Common myeloid progenitor, CD34-positive (primary cell): ENCODE measurements at regions of chr18 and their contacts with region 1.

Region 1: GRCh38 chr18:2917259-2918047 is 70.6 kb downstream of the EMILIN2 start:
- DNase-seq: peak in 2 of 3 donors; percentile 35
- H3K4me3 ChIP-seq: peak overlapping the region in 1 of 7 experiments; percentile 45
- H3K27ac ChIP-seq: peak overlapping the region; percentile 17 to 53
- H3K4me1 ChIP-seq: peaks cover 2 to 21% (median 9%) of the 10 kb centered on the region in 4 experiments
- H3K27me3 ChIP-seq: no peaks in the 10 kb centered on the region

Region 2: DNA sequence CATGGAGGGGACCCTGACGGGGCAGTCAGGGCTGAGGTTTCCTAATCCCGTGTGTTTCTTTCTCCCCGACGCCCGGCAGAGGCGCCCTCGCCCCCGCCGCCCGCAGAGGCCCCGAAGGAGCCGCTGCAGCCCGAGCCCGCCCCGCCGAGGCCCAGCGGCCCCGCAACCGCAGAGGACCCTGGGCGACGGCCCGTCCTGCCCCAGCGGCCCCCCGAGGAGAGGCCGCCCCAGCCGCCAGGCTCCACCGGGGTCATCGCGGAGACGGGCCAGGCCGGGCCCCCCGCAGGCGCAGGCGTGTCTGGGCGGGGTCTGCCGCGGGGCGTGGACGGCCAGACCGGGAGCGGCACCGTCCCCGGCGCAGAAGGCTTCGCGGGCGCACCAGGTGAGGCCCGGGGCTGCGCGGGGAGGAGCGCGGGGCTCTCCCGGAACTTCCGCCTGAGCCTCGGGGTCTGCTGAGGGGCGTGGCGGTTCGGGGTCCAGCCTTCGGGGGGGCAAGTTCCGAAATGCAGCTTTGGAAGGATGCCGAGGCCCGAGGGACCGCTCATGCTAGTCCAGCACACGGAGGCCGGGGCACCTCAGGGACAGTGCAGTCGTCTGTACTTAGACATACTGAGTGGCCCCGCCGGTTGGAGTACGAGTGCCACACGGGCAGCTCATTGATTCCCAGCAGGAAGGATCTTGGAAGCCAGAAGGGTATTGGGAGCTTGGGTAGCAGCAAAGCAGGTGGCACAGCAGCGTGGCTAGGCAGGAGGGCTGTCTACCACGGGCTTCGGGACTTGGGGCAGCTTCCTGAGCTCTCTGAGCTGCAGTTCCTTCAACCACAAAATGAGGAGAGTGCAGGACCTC is 10.5 kb before region 1 on chr18:
- CTCF ChIA-PET with region 1: interaction called, 14 read pairs
- POLR2A ChIA-PET with region 1: no interaction called
- DNase-seq: peak in 2 of 3 donors; percentile 52 to 69
- H3K4me3 ChIP-seq: peak overlapping the region; percentile 67 to 92 (median 85)
- H3K27ac ChIP-seq: no peak overlapping the region
- H3K4me1 ChIP-seq: peaks cover 0 to 30% (median 18%) of the 10 kb centered on the region in 4 experiments
- H3K27me3 ChIP-seq: no peaks in the 10 kb centered on the region

Region 3: GRCh38 chr18:2932247-2933181 is 15.1 kb after region 1 on chr18:
- CTCF ChIA-PET with region 1: interaction called, 10 read pairs
- POLR2A ChIA-PET with region 1: no interaction called
- DNase-seq: peak; percentile 68 to 88 (median 79)
- H3K4me3 ChIP-seq: no peak overlapping the region
- H3K27ac ChIP-seq: no peak overlapping the region
- H3K4me1 ChIP-seq: peaks cover 0 to 7% (median 0%) of the 10 kb centered on the region in 4 experiments
- H3K27me3 ChIP-seq: no peaks in the 10 kb centered on the region

Region 4: DNA sequence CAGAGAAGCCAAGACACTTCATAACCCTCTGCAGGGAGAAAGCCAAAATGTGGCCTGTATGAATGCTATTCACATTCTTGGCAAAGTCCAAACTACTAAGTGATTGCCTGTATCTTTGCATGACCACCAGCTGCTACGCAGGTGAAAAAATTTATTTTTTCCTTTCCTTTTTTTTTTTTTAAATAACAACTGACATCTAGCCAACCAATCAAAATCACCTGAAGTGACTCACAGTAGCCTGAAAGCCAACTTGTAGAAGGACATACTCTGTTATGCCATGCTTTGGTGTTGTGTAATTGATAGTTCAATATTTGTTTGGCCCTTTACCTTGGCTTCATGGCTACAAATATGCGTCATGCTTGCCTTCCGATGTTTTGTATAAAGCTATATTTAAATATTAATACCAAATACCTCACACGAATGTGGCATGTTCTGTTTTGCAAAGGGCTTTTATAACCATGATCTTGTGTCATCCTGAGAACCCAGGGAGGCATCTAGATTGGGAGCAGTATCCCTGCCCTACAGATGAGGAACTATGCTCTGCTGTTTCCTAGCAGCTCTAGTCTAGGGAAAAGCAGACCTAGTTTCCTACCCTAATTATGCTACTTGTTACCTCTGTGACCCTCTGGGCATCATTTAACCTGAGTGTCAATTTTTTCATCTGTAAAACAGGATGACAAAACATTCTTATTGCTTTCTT is 200.2 kb after region 1 on chr18:
- CTCF ChIA-PET with region 1: no interaction called
- POLR2A ChIA-PET with region 1: no interaction called
- DNase-seq: no peak
- H3K4me3 ChIP-seq: no peak overlapping the region
- H3K27ac ChIP-seq: no peak overlapping the region
- H3K4me1 ChIP-seq: peaks cover 2 to 15% (median 8%) of the 10 kb centered on the region in 4 experiments
- H3K27me3 ChIP-seq: no peaks in the 10 kb centered on the region